MCF 10A (cell line): ENCODE measurements at regions of chr5 and their contacts with region 1.

Region 1: DNA sequence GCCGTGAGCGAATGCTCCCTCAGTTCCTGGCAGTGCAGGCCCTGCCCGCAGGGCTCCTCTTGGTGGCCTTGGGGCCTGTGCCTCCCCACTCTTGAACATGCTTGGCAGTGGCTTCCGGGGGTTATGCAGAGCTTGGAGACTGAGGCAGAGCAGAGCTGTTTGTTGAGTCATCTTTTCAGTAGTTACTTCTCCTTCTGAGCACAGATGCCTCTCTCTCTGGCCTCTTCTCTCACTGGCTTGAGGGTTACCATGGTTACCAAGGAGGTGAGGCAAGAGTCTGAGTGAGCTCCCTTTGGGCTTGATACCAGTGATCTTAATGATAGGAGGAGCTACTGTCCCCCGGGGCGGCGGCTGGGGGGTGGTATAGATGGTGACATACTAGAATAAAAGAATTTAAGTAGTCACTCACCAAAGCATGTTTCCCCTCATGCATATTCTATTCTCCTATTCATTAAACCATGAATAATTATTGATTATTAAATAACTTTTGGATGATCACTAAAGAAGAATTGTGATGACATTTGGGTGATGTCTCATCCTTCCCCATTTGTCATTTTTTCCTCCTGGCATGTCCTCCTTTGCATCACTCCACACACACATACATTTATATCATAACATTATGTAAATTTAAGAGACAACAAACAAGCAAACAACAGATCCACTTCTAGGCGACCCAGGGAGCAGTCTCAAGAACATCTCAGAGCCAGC is 111.1 kb downstream of the ARHGAP26 start:
- DNase-seq: no peak
- H3K4me3 Mint-ChIP-seq: no peak overlapping the region
- H3K27ac Mint-ChIP-seq: no peak overlapping the region
- H3K4me1 Mint-ChIP-seq: peaks cover 19% of the 10 kb centered on the region
- H3K27me3 Mint-ChIP-seq: no peaks in the 10 kb centered on the region
- CTCF ChIP-seq: no peak

Region 2: GRCh38 chr5:142699184-142699720 is 182.0 kb before region 1 on chr5:
- CTCF ChIA-PET with region 1: interaction called, 1,942 read pairs
- POLR2A ChIA-PET with region 1: no interaction called
- intact Hi-C with region 1: no loop called
- DNase-seq: peak; percentile 93
- H3K4me3 Mint-ChIP-seq: no peak overlapping the region
- H3K27ac Mint-ChIP-seq: no peak overlapping the region
- H3K4me1 Mint-ChIP-seq: peaks cover 14% of the 10 kb centered on the region
- H3K27me3 Mint-ChIP-seq: no peaks in the 10 kb centered on the region
- CTCF ChIP-seq: peak; percentile 100

Region 3: GRCh38 chr5:142748568-142749249 is 132.5 kb before region 1 on chr5:
- CTCF ChIA-PET with region 1: interaction called, 130 read pairs
- POLR2A ChIA-PET with region 1: no interaction called
- intact Hi-C with region 1: loop called (anchors 1 kb)
- DNase-seq: peak; percentile 84
- H3K4me3 Mint-ChIP-seq: no peak overlapping the region
- H3K27ac Mint-ChIP-seq: peak overlapping the region; percentile 20
- H3K4me1 Mint-ChIP-seq: peaks cover 44% of the 10 kb centered on the region
- H3K27me3 Mint-ChIP-seq: no peaks in the 10 kb centered on the region
- CTCF ChIP-seq: peak; percentile 87

Region 4: DNA sequence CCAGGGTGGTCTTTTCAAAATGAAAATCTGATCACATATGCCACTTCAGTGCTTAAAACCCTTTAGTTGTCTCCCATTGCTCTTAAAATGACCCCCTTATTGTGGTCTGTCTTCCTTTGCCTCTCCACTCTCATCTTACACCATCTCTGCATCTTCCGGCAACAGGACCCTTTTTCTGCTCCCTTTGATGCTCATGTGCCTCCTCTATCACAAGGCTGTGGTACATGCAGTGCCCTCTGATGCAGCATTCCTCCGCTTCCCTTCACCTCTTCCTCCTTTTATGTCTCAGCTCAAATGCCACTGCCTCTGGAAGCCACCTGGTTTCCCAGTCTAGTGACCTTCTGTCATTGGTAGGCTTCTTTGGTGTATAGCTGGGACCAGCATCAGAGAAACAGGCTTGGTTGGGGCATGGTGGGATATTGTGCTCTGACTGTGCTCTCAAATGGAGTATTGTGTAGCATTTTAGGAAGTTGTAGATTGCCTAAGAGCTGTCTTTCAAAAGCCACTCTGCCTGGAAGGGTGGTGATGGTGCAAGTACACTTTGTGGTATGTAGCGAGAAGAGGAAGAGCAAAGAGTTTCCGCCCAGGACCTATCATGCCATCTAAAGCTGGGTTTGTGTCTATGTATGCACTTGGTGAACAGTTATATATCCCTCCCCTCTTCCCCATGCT is 83.0 kb before region 1 on chr5:
- CTCF ChIA-PET with region 1: interaction called, 10 read pairs
- POLR2A ChIA-PET with region 1: no interaction called
- intact Hi-C with region 1: no loop called
- DNase-seq: no peak
- H3K4me3 Mint-ChIP-seq: no peak overlapping the region
- H3K27ac Mint-ChIP-seq: no peak overlapping the region
- H3K4me1 Mint-ChIP-seq: peaks cover 10% of the 10 kb centered on the region
- H3K27me3 Mint-ChIP-seq: no peaks in the 10 kb centered on the region
- CTCF ChIP-seq: no peak

Region 5: DNA sequence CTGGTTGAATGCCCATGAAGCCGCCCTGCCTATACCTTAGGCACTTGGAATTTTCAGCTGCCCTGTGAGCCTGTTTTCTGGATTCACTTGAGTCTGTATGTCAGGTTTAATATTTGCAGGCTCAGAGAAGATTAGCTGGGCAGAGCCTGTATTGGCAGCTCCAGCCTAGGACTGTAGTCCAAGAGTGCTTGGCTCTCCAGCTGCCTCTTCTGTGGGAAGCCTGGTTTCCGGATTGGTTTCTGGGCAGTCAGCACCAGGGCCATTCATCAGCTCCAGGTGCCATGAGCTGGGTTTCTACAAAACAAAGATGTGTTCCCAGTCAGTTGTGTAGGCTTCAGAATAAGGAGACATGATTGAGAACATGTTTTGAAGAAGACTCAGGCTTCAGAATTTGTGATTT is 21.0 kb before region 1 on chr5:
- CTCF ChIA-PET with region 1: interaction called, 27 read pairs
- POLR2A ChIA-PET with region 1: no interaction called
- intact Hi-C with region 1: no loop called
- DNase-seq: no peak
- H3K4me3 Mint-ChIP-seq: no peak overlapping the region
- H3K27ac Mint-ChIP-seq: no peak overlapping the region
- H3K4me1 Mint-ChIP-seq: peaks cover 22% of the 10 kb centered on the region
- H3K27me3 Mint-ChIP-seq: no peaks in the 10 kb centered on the region
- CTCF ChIP-seq: no peak

Region 6: DNA sequence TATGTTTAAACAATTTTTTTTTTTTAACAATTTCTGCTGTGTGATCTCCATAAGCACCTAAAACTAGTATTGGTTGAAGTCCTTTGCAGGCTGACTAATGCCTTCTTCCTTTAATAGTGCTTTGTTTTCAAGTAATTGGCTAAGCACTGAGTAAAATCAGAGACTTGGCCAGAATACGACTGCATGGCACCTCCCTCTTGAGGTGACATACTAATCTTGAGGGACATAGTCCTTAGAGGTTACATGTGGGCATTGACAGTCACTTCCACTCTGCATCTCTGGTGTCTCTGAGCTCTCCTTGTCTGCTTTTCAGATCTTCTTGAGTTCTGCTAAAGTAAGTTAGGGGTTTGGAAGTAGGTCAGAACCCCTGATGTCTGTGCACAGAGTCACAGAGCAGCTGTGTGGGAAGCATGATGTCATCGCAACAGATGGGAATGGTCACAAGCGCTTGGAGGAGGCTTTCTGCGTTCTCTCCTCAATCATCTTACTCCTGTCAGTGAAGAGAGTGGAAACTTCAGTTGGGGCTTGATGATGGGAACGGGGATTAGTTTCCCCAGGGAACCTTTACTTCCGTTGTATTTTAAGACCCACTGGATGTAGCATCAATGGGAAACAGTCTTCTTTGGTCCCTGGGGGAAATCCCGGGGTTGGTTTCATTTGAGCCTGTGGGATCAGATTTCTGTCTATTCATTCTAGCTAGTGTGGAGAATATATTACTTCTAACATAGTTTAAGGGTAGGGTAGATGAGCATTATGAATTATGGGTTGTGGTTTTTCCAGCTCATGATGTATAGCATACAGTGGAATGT is 25.8 kb after region 1 on chr5:
- CTCF ChIA-PET with region 1: interaction called, 122 read pairs
- POLR2A ChIA-PET with region 1: no interaction called
- intact Hi-C with region 1: no loop called
- DNase-seq: no peak
- H3K4me3 Mint-ChIP-seq: no peak overlapping the region
- H3K27ac Mint-ChIP-seq: no peak overlapping the region
- H3K4me1 Mint-ChIP-seq: peaks cover 8% of the 10 kb centered on the region
- H3K27me3 Mint-ChIP-seq: no peaks in the 10 kb centered on the region
- CTCF ChIP-seq: no peak